ENCODE measurements at regions of chr11 and their contacts with region 1.

Region 1: DNA sequence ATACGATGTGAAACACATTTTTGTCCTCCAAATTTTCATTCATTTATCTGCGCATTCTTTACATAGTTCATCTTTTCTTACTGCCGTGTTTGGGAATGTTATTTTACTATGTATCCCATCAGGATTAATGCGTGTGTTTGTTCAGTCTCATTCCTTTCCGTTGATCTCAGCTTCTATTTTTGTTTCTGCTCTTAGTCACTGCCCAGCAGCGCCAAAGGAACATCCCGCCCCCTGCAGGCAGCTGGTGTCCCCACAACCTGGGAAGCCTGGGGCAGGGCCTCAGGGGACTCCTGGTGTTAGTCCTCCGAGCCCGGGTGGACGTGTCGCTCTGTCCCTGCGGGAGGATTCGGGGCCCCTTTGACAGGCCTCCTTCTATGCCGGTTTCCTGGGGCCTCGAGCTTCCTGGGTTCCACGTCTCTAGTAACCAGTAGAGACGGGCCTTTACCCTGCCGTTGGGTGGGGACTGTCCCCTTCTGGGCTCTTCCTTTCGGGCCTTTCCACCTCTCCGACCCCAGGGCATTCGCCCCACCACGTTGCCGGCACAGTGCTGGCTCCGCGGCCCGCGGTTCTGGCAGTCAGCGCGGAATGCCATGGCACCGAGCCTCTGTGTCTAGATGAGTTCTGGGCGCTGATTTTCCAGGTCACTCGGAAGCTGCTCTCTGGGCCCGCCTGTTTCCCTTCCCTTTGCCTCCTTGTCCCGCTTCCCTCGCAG is 39.8 kb downstream of the WEE1 start:
- DNase-seq: peak; percentile 94
- ATAC-seq: peak; percentile 64
- H3K4me3 Mint-ChIP-seq: peak overlapping the region; percentile 76
- H3K27ac Mint-ChIP-seq: peak overlapping the region; percentile 98
- H3K4me1 Mint-ChIP-seq: peaks cover 46% of the 10 kb centered on the region
- H3K27me3 Mint-ChIP-seq: no peaks in the 10 kb centered on the region

Region 2: GRCh38 chr11:9314291-9315036 is 298.8 kb before region 1 on chr11 and contains the start of gene TMEM41B:
- CTCF ChIA-PET with region 1: no interaction called
- POLR2A ChIA-PET with region 1: no interaction called
- intact Hi-C with region 1: loop called in 1 of 2 experiments (anchors 1 kb)
- DNase-seq: peak; percentile 100
- ATAC-seq: peak; percentile 95
- H3K4me3 Mint-ChIP-seq: peak within 1 kb of the TSS; percentile 99
- H3K27ac Mint-ChIP-seq: peak within 1 kb of the TSS; percentile 99
- H3K4me1 Mint-ChIP-seq: peaks cover 36% of the 10 kb centered on the region
- H3K27me3 Mint-ChIP-seq: peaks cover 11% of the 10 kb centered on the region
- total RNA-seq, gene TMEM41B: 20.2 to 29.3 TPM

Region 3: DNA sequence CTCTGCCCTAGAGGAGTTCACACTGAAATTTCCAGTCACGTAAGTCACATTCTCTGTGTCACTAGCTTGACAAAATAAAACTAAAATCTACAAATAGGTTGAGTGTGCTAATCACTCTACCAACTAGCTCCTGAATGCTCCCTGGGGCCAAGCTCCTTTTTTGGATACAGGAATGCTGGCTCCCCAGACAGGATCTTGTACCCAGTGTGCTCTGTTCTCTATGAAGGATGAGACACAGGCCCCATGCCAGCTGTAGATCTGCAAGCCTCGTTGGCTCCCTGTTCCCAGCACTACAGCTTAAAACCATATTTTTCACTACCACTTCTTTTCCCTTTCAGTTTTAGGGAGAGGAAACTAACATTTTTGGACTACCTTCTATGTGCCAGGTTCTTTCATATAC is 232.5 kb before region 1 on chr11:
- CTCF ChIA-PET with region 1: no interaction called
- POLR2A ChIA-PET with region 1: no interaction called
- intact Hi-C with region 1: no loop called
- DNase-seq: no peak
- ATAC-seq: no peak
- H3K4me3 Mint-ChIP-seq: no peak overlapping the region
- H3K27ac Mint-ChIP-seq: no peak overlapping the region
- H3K4me1 Mint-ChIP-seq: peaks cover 10% of the 10 kb centered on the region
- H3K27me3 Mint-ChIP-seq: no peaks in the 10 kb centered on the region

Region 4: DNA sequence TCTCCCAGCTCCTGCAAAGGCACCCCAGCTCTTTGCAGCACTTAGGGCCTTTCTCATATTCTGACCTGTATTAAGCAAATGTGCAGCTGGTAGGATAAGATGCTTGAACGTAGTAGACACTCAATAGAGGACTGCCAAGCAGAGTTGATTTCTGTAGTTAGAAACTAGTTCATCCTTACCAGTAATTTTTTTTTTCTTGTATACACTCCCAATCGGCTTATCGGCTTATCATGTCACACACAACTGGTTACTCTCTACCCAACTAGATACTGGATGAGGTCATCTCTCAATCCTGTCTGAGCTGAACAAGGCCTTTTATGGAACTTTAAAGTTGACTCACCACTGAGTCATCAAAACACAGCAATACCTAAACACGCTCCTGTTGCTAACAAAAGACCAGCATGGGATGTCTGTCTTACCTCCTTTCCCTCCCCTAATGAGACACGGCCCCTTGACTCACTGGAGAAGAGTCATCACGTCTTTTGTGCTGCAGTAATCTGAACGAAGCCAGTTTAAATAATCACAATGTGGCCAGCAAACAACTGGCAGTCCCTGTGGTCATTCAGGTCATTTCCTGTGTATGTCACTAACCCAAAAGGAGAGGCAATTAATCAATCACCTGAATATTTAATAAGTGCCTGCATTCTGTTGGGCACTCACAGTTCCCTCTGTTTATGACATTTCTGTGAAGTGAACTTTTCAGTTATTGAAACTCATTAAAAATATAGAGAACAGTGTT is 47.3 kb before region 1 on chr11:
- CTCF ChIA-PET with region 1: interaction called, 4 read pairs
- POLR2A ChIA-PET with region 1: no interaction called
- intact Hi-C with region 1: loop called in 1 of 2 experiments (anchors 1 kb)
- DNase-seq: peak; percentile 77
- ATAC-seq: peak; percentile 97
- H3K4me3 Mint-ChIP-seq: no peak overlapping the region
- H3K27ac Mint-ChIP-seq: peak overlapping the region; percentile 81
- H3K4me1 Mint-ChIP-seq: peaks cover 28% of the 10 kb centered on the region
- H3K27me3 Mint-ChIP-seq: peaks cover 3% of the 10 kb centered on the region

Region 5: DNA sequence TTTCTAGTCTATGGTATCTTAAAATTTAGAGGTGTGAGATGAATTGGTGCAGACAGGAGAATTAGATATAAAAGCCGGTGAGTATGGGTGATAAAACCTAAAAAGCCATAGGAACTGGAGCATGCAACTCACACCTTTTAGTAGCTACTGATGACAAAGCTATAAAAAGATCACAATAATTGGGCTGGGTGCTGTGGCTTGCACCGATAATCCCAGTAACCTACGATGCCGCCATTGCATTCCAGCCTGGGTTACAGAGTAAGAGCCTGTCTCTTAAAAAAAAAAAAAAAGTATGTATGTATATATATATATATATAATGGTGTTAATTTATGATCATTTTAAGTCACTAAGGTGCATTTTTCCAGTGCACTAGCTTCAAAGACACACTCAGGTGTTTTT is 22.6 kb before region 1 on chr11:
- CTCF ChIA-PET with region 1: interaction called, 29 read pairs
- POLR2A ChIA-PET with region 1: no interaction called
- intact Hi-C with region 1: no loop called
- DNase-seq: no peak
- ATAC-seq: no peak
- H3K4me3 Mint-ChIP-seq: no peak overlapping the region
- H3K27ac Mint-ChIP-seq: no peak overlapping the region
- H3K4me1 Mint-ChIP-seq: no peaks in the 10 kb centered on the region
- H3K27me3 Mint-ChIP-seq: no peaks in the 10 kb centered on the region

Region 6: DNA sequence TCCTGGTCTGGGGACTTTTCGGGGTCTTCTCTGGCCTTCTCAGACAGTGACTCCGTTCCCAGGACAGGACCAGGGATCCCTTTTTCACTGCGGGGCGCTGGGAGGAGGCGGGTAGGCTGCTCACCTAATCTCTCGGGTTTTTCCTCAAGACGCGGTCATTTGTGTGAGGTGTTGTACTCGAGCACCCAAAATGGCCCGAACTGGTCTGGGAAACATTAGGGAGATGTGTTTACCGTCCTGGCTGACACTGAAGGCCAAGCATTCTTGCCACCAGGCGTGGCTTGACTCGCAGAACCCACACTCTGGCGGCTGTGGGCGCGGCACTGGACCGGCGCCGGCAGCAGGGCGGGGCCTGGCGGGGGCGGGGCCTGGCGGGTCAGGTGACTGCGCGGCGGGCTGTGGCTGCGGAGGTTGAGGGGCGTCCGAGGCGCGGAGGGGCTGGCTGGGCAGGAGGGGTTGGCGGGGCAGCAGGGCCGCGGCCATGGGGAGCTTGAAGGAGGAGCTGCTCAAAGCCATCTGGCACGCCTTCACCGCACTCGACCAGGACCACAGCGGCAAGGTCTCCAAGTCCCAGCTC is 50.5 kb after region 1 on chr11 and contains the start of gene SWAP70:
- CTCF ChIA-PET with region 1: interaction called, 3 read pairs
- POLR2A ChIA-PET with region 1: no interaction called
- intact Hi-C with region 1: loop called in 1 of 2 experiments (anchors 1 kb)
- DNase-seq: peak; percentile 85
- ATAC-seq: peak; percentile 94
- H3K4me3 Mint-ChIP-seq: peak within 1 kb of the TSS; percentile 79
- H3K27ac Mint-ChIP-seq: peak within 1 kb of the TSS; percentile 42
- H3K4me1 Mint-ChIP-seq: peaks cover 11% of the 10 kb centered on the region
- H3K27me3 Mint-ChIP-seq: peaks cover 24% of the 10 kb centered on the region
- total RNA-seq, gene SWAP70: 7.5 to 9.7 TPM

Region 7: DNA sequence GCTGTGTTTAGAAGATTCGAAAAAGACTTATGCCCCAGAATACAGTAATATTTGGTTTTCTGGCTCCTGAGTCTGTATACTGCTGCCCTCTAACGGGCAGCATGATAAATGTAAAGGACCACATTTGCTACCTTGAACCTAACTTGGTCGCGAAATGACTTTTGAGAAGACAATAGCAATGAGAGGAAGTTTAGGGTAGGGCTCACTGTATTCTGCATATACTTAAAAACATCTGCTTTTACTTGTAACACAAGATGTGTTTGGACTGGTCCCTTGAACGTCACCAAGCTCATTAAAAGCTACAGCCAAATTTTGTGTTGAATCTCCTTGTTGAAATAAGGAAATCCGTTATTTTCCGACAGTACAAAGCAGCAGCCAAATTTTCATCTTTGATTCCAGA is 359.7 kb after region 1 on chr11:
- CTCF ChIA-PET with region 1: no interaction called
- POLR2A ChIA-PET with region 1: no interaction called
- intact Hi-C with region 1: loop called (anchors 1 to 5 kb)
- DNase-seq: peak; percentile 37
- ATAC-seq: peak; percentile 78
- H3K4me3 Mint-ChIP-seq: no peak overlapping the region
- H3K27ac Mint-ChIP-seq: no peak overlapping the region
- H3K4me1 Mint-ChIP-seq: no peaks in the 10 kb centered on the region
- H3K27me3 Mint-ChIP-seq: no peaks in the 10 kb centered on the region